Activated CD8-positive, alpha-beta T cell treated with anti-CD3 and anti-CD28 coated beads for 36 hours (primary cell): ENCODE measurements at regions of chr15 and their contacts with region 1.

Region 1: GRCh38 chr15:67863442-67863987 is 23.7 kb upstream of the RNU6-1 start:
- DNase-seq: peak; percentile 77
- ATAC-seq: peak; percentile 99
- H3K4me3 Mint-ChIP-seq: peak overlapping the region; percentile 55
- H3K27ac Mint-ChIP-seq: no peak overlapping the region
- H3K4me1 Mint-ChIP-seq: peaks cover 5% of the 10 kb centered on the region
- H3K27me3 Mint-ChIP-seq: peaks cover 11% of the 10 kb centered on the region
- CTCF ChIP-seq: peak; percentile 76

Region 2: DNA sequence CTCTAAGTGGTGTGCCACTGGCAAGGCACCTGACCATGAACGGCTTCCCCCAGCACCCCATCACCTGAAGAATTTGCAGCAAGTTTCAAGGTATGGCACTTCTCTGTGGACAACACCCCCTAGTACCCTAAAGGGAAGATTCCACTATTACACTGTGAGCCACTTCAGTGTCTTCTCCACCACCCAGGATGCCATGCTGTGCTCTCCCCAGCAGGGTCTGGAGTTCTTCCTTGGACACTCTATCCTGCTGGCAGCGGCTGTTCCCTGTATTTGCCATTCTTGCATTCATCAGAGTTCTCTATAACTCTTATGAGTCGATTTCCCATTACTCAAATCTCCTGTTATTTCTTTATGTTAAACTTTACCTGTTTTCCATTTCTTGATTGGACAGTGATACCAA is 10.3 kb after region 1 on chr15:
- CTCF ChIA-PET with region 1: interaction called, 17 read pairs
- POLR2A ChIA-PET with region 1: no interaction called
- intact Hi-C with region 1: no loop called
- DNase-seq: no peak
- ATAC-seq: no peak
- H3K4me3 Mint-ChIP-seq: no peak overlapping the region
- H3K27ac Mint-ChIP-seq: no peak overlapping the region
- H3K4me1 Mint-ChIP-seq: peaks cover 7% of the 10 kb centered on the region
- H3K27me3 Mint-ChIP-seq: peaks cover 8% of the 10 kb centered on the region
- CTCF ChIP-seq: no peak

Region 3: DNA sequence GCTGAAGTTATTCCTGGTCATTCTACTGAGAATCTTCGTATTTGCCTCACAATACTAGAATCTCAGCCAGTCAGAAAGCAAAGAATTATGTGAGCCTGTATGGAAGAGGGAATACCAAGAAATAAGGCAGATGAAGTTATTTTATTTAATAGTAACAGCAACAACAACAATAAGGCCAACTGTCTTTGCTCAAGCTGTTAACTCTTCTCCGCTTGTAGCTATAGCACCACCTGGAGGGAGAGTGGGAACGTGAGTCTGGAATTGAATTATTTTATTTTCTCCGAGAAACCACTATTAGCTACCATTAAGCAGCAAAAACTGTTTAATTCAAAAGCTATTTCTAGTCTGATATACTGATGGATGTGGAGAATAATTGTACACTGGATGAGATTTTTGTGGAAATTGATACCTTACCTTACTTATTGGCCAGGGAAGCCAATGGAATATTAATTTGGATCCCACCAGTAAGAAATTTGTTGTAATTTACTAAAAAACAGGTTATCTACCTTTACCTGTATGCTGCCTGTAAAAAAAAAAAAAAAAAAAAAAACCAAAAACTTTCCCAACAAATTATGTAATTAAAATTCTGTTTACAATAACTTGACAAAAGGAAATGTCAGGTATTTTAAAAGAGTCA is 291.5 kb after region 1 on chr15:
- CTCF ChIA-PET with region 1: interaction called, 30 read pairs
- POLR2A ChIA-PET with region 1: interaction called, 3 read pairs
- intact Hi-C with region 1: loop called (anchors 2 kb)
- DNase-seq: peak; percentile 36
- ATAC-seq: no peak
- H3K4me3 Mint-ChIP-seq: no peak overlapping the region
- H3K27ac Mint-ChIP-seq: no peak overlapping the region
- H3K4me1 Mint-ChIP-seq: peaks cover 4% of the 10 kb centered on the region
- H3K27me3 Mint-ChIP-seq: no peaks in the 10 kb centered on the region
- CTCF ChIP-seq: peak; percentile 60

Region 4: GRCh38 chr15:68192804-68193486 is 329.4 kb after region 1 on chr15:
- CTCF ChIA-PET with region 1: interaction called, 14 read pairs
- POLR2A ChIA-PET with region 1: no interaction called
- intact Hi-C with region 1: no loop called
- DNase-seq: no peak
- ATAC-seq: no peak
- H3K4me3 Mint-ChIP-seq: no peak overlapping the region
- H3K27ac Mint-ChIP-seq: peak overlapping the region; percentile 0
- H3K4me1 Mint-ChIP-seq: no peaks in the 10 kb centered on the region
- H3K27me3 Mint-ChIP-seq: no peaks in the 10 kb centered on the region
- CTCF ChIP-seq: no peak

Region 5: DNA sequence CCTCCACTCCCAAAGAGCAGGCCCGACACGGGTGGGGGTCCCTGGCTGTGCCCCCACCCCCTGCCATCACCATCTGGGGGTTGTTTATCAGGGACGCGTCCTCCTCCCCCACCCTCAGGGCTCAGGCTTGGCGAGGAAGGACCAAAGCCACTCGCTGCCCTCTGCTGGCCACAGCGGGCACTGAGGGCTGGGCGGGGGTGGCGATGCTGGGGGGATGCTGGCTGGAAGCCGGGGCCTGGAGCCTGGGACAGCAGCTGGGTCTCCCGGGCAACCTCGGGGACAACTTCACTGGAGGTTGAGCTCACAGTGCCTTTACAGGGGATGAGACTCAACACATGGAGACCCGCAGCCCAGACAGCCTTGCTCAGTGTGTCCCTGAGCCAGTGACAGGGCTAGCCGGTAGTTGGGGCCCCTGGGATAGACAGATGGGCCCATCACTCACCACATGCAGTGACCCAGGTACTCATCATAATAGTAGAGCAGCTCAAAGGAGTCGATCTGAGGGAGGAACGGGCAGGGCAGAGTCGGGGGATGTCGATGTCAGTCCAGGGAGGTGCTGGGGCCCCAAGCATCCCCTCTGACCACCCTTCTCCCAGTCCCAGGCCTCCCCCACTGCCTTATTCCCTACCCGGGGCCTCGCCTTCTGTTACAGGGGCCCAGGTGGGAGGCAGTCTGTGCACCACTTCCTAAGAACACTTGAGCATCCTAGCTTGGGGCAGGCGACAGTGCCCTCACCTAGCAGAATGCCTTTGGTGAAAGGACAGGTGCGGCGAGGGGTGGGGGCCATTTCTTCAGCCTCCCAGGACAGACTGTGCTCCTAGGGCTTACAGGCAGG is 347.5 kb after region 1 on chr15:
- CTCF ChIA-PET with region 1: interaction called, 10 read pairs
- POLR2A ChIA-PET with region 1: no interaction called
- intact Hi-C with region 1: no loop called
- DNase-seq: peak; percentile 64
- ATAC-seq: peak; percentile 48
- H3K4me3 Mint-ChIP-seq: no peak overlapping the region
- H3K27ac Mint-ChIP-seq: no peak overlapping the region
- H3K4me1 Mint-ChIP-seq: peaks cover 26% of the 10 kb centered on the region
- H3K27me3 Mint-ChIP-seq: no peaks in the 10 kb centered on the region
- CTCF ChIP-seq: peak; percentile 78